B cell (primary cell): ENCODE measurements at regions of chr10 and their contacts with region 1.

Region 1: GRCh38 chr10:22340362-22341189 is 4.7 kb upstream of the SPAG6 start:
- DNase-seq: peak; percentile 92
- ATAC-seq: peak; percentile 62
- H3K4me3 ChIP-seq: peak overlapping the region; percentile 62 to 79 (median 73)
- H3K4me3 Mint-ChIP-seq: peak overlapping the region; percentile 94
- H3K27ac ChIP-seq: peak overlapping the region; percentile 70 to 81
- H3K27ac Mint-ChIP-seq: peak overlapping the region; percentile 94
- H3K4me1 ChIP-seq: peaks cover 38 to 72% of the 10 kb centered on the region in 2 donors
- H3K4me1 Mint-ChIP-seq: peaks cover 31% of the 10 kb centered on the region
- H3K27me3 ChIP-seq: peaks cover 11 to 86% (median 73%) of the 10 kb centered on the region in 4 experiments
- H3K27me3 Mint-ChIP-seq: peaks cover 58% of the 10 kb centered on the region
- CTCF ChIP-seq: no peak

Region 2: GRCh38 chr10:21525367-21526183 is 815.0 kb before region 1 on chr10 and contains the start of gene SKIDA1:
- CTCF ChIA-PET with region 1: interaction called, 3 read pairs
- POLR2A ChIA-PET with region 1: interaction called, 3 read pairs
- intact Hi-C with region 1: loop called (anchors 2 kb)
- DNase-seq: peak; percentile 69
- ATAC-seq: peak; percentile 65
- H3K4me3 ChIP-seq: peak within 1 kb of the TSS; percentile 60 to 73 (median 64)
- H3K4me3 Mint-ChIP-seq: peak within 1 kb of the TSS; percentile 89
- H3K27ac ChIP-seq: peak within 1 kb of the TSS; percentile 31 to 52
- H3K27ac Mint-ChIP-seq: peak within 1 kb of the TSS; percentile 91
- H3K4me1 ChIP-seq: peaks cover 24 to 37% of the 10 kb centered on the region in 2 donors
- H3K4me1 Mint-ChIP-seq: peaks cover 25% of the 10 kb centered on the region
- H3K27me3 ChIP-seq: peaks cover 0 to 52% (median 46%) of the 10 kb centered on the region in 4 experiments
- H3K27me3 Mint-ChIP-seq: peaks cover 59% of the 10 kb centered on the region
- CTCF ChIP-seq: no peak
- total RNA-seq, gene SKIDA1: 0.10 TPM in 1 of 2 replicates, not detected in the other

Region 3: DNA sequence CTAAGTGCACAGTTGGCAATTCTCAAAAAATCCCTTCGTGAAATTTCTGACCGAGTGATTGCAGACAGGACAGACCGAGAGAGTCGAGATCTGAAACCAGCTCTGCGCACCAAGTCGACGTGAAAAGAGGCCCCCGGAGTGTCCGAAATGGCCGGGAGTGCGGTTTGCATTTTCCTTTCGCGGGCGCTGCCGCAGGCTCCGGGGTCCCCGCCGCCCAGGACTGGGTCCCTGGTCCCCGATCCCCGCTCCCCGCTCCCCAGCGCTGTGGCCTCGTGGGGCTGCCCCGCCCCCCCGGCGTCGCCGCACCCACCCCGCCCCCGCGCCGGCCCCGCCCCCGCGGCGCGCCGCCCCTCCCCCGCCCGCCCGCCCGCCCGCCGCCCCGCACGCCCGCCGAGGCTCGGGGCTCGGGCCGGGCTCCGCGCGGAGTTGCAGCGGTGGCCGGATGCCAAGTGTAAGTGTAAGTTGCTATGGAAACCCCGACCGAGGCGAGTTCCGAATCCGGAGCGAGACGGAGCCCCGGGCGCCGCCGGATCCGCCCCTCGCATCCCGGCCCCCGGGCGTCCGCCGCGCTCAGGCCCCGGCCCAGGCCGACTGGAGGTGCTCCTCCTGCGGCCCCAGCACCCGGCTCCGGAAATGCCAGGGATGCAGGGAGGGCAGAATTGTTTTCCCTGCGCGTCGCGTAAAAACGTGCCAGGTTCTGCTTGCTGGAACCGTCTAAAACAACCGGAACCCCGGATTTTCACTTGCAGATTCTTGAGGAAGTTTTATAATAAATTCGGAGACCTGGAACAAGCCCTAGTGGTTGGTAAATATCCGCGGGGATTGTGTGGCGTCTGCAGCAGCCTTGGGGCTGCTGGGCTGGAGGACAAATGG is 15.1 kb before region 1 on chr10:
- CTCF ChIA-PET with region 1: interaction called, 8 read pairs
- POLR2A ChIA-PET with region 1: interaction called, 28 read pairs
- intact Hi-C with region 1: loop called (anchors 2 kb)
- DNase-seq: peak; percentile 85
- ATAC-seq: peak; percentile 32
- H3K4me3 ChIP-seq: peak overlapping the region; percentile 52 to 80 (median 73)
- H3K4me3 Mint-ChIP-seq: peak overlapping the region; percentile 90
- H3K27ac ChIP-seq: peak overlapping the region; percentile 0 to 63
- H3K27ac Mint-ChIP-seq: peak overlapping the region; percentile 90
- H3K4me1 ChIP-seq: peaks cover 28 to 37% of the 10 kb centered on the region in 2 donors
- H3K4me1 Mint-ChIP-seq: peaks cover 39% of the 10 kb centered on the region
- H3K27me3 ChIP-seq: peaks cover 0 to 16% (median 4%) of the 10 kb centered on the region in 4 experiments
- H3K27me3 Mint-ChIP-seq: no peaks in the 10 kb centered on the region
- CTCF ChIP-seq: no peak

Region 4: GRCh38 chr10:22475651-22476600 is 135.3 kb after region 1 on chr10:
- CTCF ChIA-PET with region 1: interaction called, 3 read pairs
- POLR2A ChIA-PET with region 1: no interaction called
- intact Hi-C with region 1: loop called (anchors 2 kb)
- DNase-seq: peak; percentile 68
- ATAC-seq: peak; percentile 31
- H3K4me3 ChIP-seq: peak overlapping the region; percentile 35 to 58 (median 41)
- H3K4me3 Mint-ChIP-seq: peak overlapping the region; percentile 95
- H3K27ac ChIP-seq: no peak overlapping the region
- H3K27ac Mint-ChIP-seq: peak overlapping the region; percentile 72
- H3K4me1 ChIP-seq: peaks cover 20 to 25% of the 10 kb centered on the region in 2 donors
- H3K4me1 Mint-ChIP-seq: peaks cover 15% of the 10 kb centered on the region
- H3K27me3 ChIP-seq: peaks cover 1 to 55% (median 44%) of the 10 kb centered on the region in 4 experiments
- H3K27me3 Mint-ChIP-seq: peaks cover 47% of the 10 kb centered on the region
- CTCF ChIP-seq: no peak